Mammary epithelial cell (primary cell): ENCODE measurements at regions of chr1 and their contacts with region 1.

Region 1: DNA sequence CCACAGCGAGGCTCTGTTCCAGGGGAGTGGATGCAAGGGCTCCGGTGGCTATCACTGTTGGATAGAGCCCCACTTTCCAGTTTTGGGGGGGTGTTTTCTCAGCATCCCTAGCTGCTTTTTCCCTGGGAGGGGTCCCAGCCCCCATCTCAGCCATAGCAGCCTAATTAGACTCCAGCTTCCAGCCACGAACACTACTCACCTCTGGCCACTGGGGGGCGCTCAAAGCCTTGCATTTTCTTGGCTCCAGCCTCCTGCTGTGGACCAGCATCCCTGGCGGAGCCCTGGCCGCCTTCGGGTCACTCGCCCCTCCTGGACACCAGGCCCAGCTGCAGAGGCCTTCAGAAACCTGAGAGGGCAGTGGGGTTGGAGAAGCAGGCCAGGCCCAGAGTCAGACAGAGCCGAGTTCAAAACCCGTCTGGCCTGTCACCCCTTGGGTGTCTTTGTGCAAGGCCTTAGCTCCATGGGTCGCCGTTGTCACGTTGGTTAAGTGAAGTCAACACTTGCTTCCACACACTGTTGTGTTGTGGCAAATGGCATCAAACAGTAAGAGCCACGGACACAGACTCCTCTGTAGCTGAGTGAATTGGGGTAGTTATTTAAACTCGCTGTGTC is 93.5 kb upstream of the ACTL8 start:
- DNase-seq: peak; percentile 34
- H3K4me3 ChIP-seq: no peak overlapping the region
- H3K27ac ChIP-seq: no peak overlapping the region
- H3K4me1 ChIP-seq: no peaks in the 10 kb centered on the region
- H3K27me3 ChIP-seq: no peaks in the 10 kb centered on the region
- CTCF ChIP-seq: peak; percentile 75 to 84

Region 2: DNA sequence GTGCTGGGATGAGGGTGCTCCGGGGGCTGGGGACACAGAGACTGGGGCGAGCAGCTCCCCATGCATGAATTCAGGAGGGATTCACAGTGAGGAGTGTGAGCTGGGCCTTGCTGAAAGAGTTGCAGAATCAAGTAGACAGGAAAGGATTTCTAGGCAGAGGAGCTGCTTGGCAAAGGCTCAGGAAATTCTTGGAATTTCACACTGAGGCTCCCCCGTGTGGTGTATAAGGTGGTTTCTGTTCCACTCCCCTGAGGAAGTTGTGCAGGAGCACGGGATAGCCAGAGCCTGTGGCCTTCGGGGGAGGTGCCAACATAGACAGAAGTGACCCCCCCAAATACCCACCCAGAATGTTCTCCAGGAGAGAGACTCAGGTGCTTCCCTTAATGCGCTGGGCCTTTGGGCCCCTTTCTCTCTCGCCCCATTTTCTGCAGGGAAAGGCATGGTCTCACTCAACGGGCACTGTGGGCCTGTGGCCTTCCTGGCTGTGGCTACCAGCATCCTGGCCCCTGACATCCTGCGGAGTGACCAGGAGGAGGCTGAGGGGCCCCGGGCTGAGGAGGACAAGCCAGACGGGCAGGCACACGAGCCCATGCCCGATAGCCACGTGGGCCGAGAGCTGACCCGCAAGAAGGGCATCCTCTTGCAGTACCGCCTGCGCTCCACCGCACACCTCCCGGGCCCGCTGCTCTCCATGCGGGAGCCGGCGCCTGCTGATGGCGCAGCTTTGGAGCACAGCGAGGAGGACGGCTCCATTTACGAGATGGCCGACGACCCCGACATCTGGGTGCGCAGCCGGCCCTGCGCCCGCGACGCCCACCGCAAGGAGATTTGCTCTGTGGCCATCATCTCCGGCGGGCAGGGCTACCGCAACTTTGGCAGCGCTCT is 35.0 kb after region 1 on chr1:
- CTCF ChIA-PET with region 1: no interaction called
- dilution Hi-C with region 1: no loop called
- in situ Hi-C with region 1: no loop called
- intact Hi-C with region 1: loop called (anchors 1 kb)
- DNase-seq: peak; percentile 27
- H3K4me3 ChIP-seq: no peak overlapping the region
- H3K27ac ChIP-seq: no peak overlapping the region
- H3K4me1 ChIP-seq: no peaks in the 10 kb centered on the region
- H3K27me3 ChIP-seq: no peaks in the 10 kb centered on the region
- CTCF ChIP-seq: peak; percentile 12 to 46

Region 3: DNA sequence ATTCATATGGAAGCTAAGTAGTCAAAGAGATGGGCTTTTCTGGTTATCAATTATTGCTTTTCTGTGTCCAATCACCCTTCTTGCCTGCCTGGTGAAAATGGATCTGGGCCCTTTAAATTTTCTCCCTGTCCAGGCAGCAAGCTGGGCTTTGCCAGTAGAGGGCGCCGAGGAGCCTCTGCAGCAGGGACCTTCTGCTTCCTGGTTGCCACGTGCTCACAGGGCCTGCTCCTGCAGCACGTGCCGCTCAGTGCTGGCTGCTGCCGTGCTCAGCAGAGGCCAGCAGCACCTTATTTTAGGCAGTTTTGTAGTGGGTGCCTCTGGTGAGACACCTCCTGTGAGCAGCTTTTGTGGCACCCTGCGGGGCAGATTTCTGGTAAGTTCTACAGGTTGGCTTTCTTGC is 97.5 kb after region 1 on chr1:
- CTCF ChIA-PET with region 1: no interaction called
- dilution Hi-C with region 1: no loop called
- in situ Hi-C with region 1: no loop called
- intact Hi-C with region 1: no loop called
- DNase-seq: no peak
- H3K4me3 ChIP-seq: no peak overlapping the region
- H3K27ac ChIP-seq: no peak overlapping the region
- H3K4me1 ChIP-seq: no peaks in the 10 kb centered on the region
- H3K27me3 ChIP-seq: no peaks in the 10 kb centered on the region
- CTCF ChIP-seq: no peak

Region 4: GRCh38 chr1:17903386-17903785 is 241.7 kb after region 1 on chr1:
- CTCF ChIA-PET with region 1: no interaction called
- dilution Hi-C with region 1: no loop called
- in situ Hi-C with region 1: no loop called
- intact Hi-C with region 1: no loop called
- DNase-seq: no peak
- H3K4me3 ChIP-seq: no peak overlapping the region
- H3K27ac ChIP-seq: no peak overlapping the region
- H3K4me1 ChIP-seq: no peaks in the 10 kb centered on the region
- H3K27me3 ChIP-seq: no peaks in the 10 kb centered on the region
- CTCF ChIP-seq: no peak

Region 5: GRCh38 chr1:18100491-18101063 is 438.9 kb after region 1 on chr1:
- CTCF ChIA-PET with region 1: no interaction called
- dilution Hi-C with region 1: no loop called
- in situ Hi-C with region 1: no loop called
- intact Hi-C with region 1: loop called (anchors 1 kb)
- DNase-seq: peak; percentile 25
- H3K4me3 ChIP-seq: no peak overlapping the region
- H3K27ac ChIP-seq: no peak overlapping the region
- H3K4me1 ChIP-seq: no peaks in the 10 kb centered on the region
- H3K27me3 ChIP-seq: no peaks in the 10 kb centered on the region
- CTCF ChIP-seq: peak; percentile 68 to 75